Left lung (tissue), 14 donors: ENCODE measurements at regions of chr5 and their contacts with region 1.

Region 1: DNA sequence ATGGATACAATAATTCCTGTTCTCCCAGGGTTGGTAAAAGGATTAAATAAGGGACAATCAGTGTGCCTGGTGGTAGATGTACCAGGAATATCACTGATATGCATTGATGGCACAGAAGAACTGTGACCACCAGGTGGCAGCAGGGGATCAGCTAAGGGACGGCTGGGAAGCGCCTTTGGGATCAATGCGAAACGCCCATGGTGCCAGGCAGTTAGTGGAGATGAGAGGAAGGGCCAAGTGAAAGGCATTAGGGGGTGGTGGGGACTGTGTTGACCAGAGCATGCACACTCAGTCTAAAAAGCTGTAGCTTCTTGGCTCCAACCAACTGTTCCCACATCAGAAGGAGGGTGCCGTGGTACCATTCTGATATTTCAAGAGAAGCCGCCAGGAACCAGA is 55.6 kb downstream of the ARHGEF37 start:
- DNase-seq: peak; percentile 31 to 86 (median 56)
- ATAC-seq: peak; percentile 77
- H3K4me3 ChIP-seq: no peak overlapping the region
- H3K27ac ChIP-seq: no peak overlapping the region
- H3K4me1 ChIP-seq: peaks cover 0 to 5% of the 10 kb centered on the region in 2 donors
- H3K27me3 ChIP-seq: no peaks in the 10 kb centered on the region
- CTCF ChIP-seq: peak; percentile 80 to 89

Region 2: DNA sequence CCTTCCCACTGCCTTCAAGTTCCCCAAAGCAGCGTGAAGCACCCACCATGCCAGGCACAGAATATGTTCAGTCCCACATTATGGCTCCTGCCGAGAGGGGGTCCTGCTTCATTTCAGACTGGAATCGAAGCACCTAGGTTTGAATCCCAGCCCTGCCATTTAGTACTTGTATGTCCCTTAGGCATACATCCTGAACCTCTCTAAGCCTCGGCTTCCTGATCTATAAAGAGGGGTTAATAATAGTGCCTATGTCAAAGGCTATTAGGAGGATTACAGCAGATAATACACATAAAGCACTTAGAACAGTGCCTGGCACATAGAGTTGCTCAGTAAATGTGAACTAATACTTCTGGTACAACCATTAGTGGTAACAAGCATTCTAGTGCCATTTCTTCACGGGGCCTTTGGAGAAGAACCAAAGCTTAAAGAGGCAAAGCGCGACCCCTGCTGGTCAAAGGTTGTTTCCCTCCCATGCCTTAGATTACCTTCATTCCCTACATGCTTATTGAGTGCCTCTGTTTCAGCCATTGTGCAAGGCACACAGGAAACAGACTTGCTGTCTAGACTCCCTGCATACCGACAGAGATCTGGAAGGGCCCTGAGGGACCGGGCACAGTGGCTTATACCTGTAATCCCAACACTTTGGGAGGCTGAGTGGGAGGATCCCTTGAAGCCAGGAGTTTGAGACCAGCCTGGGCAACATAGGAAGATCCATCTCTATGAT is 191.5 kb after region 1 on chr5:
- intact Hi-C with region 1: loop called in 1 of 2 experiments (anchors 2 kb)
- DNase-seq: peak in 3 of 4 donors; percentile 78 to 91 (median 83)
- ATAC-seq: peak; percentile 93
- H3K4me3 ChIP-seq: no peak overlapping the region
- H3K27ac ChIP-seq: no peak overlapping the region
- H3K4me1 ChIP-seq: no peaks in the 10 kb centered on the region
- H3K27me3 ChIP-seq: no peaks in the 10 kb centered on the region
- CTCF ChIP-seq: peak; percentile 89 to 92